ENCODE measurements at regions of chr10 and their contacts with region 1.

Region 1: DNA sequence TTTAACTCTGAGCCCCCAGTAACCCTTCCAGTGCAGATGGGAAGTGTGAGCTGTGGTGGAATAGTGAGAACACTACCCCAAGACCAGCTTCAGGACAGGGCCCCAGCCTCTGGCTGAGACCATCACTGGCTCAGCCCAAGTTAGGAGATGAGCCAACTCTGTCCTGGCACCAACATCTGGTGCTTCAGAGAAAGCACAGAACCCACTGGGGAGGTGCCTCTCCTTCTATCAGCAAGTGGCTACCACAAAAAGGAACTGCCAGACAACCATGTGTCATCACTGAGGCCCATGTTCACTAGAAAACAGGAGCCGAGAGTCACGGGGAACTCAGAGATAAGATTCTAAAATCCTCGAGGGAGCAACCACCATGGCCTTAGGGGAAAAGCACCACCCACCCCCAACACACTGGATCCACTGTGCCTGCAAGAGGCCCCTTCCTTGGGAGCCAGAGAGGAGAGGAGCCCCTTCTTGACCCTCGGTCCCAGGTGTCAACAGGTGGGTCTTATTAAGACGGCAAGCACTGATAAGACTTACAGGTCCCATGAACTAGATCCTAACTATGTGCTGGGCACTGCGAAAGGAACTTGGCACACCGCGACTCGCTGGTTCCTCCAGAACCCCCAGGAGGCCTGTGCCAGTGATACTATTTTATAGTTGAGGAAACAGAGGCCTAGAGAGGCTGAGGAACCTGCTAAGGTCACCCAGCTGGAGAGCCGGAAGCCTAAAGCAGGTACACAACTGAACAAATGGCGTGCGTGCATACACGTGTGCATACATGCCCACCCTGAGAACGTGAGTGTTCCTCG is 102.7 kb downstream of the FAM53B start:
- H3K4me3 Mint-ChIP-seq: peak overlapping the region; percentile 49
- H3K27ac Mint-ChIP-seq: peak overlapping the region; percentile 98
- H3K4me1 Mint-ChIP-seq: peaks cover 100% of the 10 kb centered on the region
- H3K27me3 Mint-ChIP-seq: no peaks in the 10 kb centered on the region

Region 2: GRCh38 chr10:124653811-124654651 is 12.5 kb after region 1 on chr10:
- intact Hi-C with region 1: no loop called
- H3K4me3 Mint-ChIP-seq: no peak overlapping the region
- H3K27ac Mint-ChIP-seq: peak overlapping the region; percentile 43
- H3K4me1 Mint-ChIP-seq: peaks cover 69% of the 10 kb centered on the region
- H3K27me3 Mint-ChIP-seq: no peaks in the 10 kb centered on the region

Region 3: DNA sequence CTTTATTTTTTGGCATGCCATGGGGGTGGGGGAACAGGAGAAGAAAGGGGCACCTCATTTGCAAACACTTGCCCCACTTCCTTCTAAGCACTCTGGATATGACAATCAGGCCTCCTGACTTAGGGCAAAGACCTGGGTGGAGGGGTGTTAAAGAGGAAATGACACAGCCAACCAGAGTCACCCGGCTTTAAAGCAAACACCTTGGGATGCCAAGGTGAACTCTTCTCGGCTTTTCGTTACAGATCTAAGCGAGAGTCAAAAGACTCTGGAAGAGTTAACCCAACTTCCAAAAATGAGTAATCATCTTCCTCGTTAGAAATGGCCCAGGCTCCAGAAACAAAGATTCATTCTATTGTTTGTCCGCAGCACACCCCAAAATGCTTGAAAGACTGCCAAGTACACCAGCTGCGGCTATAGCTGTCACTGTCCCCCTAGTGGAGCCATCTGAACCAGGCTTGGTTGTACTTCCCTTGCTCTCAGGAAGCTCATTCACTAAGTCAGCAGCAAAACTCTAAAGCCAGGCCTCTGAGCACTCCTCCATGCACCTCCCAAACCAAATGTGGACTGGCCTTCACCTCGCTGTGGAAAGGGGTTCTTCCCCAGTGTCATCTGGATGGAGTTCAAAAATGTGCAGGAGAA is 77.8 kb after region 1 on chr10:
- intact Hi-C with region 1: loop called (anchors 2 kb)
- H3K4me3 Mint-ChIP-seq: peak overlapping the region; percentile 14
- H3K27ac Mint-ChIP-seq: peak overlapping the region; percentile 86
- H3K4me1 Mint-ChIP-seq: peaks cover 91% of the 10 kb centered on the region
- H3K27me3 Mint-ChIP-seq: no peaks in the 10 kb centered on the region